Ascending aorta (tissue), 2 donors: ENCODE measurements at regions of chr2 and their contacts with region 1.

Region 1: DNA sequence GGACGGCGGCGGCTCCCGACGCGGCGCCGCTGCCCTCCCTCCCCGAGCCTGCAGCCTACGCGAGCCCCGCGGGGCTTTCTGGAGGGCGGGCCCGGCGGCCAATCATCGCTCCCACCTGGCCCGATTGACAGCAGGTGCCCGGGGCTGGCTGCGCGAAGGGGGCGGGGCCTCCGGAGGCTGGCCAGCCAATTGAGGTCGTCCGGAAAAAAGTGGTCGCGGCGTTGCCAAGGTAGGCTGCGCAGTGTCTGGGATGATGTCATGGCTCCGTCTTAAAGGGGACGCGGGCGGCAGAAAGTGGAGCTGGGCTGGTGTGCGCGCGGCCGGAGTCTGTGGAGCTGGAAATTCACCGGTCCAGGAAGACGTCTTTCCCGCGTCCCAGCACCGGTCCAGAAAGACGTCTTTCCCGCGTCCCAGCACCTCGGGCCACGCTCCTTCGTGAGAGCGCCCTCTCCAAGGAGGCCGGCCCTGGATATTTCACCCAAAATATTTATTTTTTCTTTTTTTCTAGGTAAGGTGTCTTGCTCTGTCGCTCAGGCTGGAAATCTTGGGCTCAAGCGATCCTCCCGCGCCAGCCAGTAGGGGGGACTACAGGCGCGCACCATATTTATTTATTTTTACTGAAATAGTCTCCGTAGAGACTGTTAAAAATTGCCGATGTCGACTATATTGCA is at the start of gene ACTR1B:
- DNase-seq: peak; percentile 93 to 99
- H3K4me3 ChIP-seq: peak within 1 kb of the TSS; percentile 78 to 96
- H3K27ac ChIP-seq: peak within 1 kb of the TSS; percentile 94 to 95
- H3K4me1 ChIP-seq: peaks cover 13 to 24% of the 10 kb centered on the region in 2 donors
- H3K27me3 ChIP-seq: no peaks in the 10 kb centered on the region
- CTCF ChIP-seq: peak; percentile 57 to 68 (median 61)
- total RNA-seq, gene ACTR1B: 125 TPM

Region 2: GRCh38 chr2:97645695-97646629 is 18.1 kb before region 1 on chr2 and contains the start of gene COX5B:
- intact Hi-C with region 1: loop called (anchors 1 kb)
- DNase-seq: peak; percentile 96 to 99
- H3K4me3 ChIP-seq: peak within 1 kb of the TSS; percentile 87 to 92
- H3K27ac ChIP-seq: peak within 1 kb of the TSS; percentile 96 to 98
- H3K4me1 ChIP-seq: peaks cover 3 to 9% of the 10 kb centered on the region in 2 donors
- H3K27me3 ChIP-seq: no peaks in the 10 kb centered on the region
- CTCF ChIP-seq: no peak
- total RNA-seq, gene COX5B: 251 TPM

Region 3: DNA sequence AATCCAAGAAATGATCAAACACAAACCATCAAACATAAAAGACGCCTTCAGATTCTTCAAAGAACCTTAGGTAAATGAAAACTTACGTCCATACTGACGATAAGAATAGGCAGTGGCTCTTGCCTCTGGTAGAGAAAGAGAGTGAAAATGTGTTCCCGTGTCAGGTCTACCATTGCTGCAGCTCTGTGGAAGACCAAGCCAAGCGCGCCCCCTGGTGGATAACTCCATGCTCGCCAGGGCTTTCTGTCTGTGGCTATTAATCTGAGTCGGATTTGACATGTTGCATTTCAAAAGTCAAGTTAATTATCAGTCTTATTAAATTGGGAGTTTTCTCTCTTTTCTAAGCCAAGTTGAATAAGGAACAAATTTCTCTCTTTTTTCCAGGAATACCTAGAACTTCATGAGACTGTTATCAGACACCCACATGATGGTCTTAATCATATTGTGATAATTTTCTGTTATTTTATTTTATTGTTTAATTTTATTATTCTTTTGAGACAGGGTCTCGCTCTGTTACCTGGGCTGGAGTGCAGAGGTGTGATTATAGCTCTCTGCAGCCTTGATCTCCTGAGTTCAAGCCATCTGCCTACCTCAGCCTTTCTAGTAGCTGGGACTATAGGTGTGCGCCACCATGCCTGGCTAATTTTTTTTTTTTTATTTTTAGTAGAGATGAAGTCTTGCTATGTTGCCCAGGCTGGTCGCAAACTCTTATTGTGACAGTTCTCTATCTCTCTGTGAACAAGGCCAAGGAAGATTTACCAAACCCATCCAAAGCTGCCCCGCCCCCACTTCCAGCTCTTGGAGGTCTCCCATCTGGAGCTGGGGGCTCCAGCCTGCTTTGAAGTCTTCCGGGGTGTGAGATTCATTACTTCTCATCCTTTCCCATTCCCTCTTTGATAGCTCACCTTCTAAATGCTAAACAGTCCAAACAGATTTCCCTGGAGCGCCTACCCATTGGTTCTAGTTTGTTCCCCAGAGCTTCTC is 33.4 kb after region 1 on chr2:
- intact Hi-C with region 1: loop called (anchors 2 kb)
- DNase-seq: peak; percentile 28 to 95
- H3K4me3 ChIP-seq: no peak overlapping the region
- H3K27ac ChIP-seq: no peak overlapping the region
- H3K4me1 ChIP-seq: peaks cover 0 to 2% of the 10 kb centered on the region in 2 donors
- H3K27me3 ChIP-seq: no peaks in the 10 kb centered on the region
- CTCF ChIP-seq: peak; percentile 82 to 92 (median 91)

Region 4: GRCh38 chr2:98160554-98160953 is 496.5 kb after region 1 on chr2:
- intact Hi-C with region 1: loop called (anchors 5 kb)
- DNase-seq: peak in 1 of 2 donors; percentile 69
- H3K4me3 ChIP-seq: no peak overlapping the region
- H3K27ac ChIP-seq: peak overlapping the region; percentile 79 to 83
- H3K4me1 ChIP-seq: peaks cover 31 to 44% of the 10 kb centered on the region in 2 donors
- H3K27me3 ChIP-seq: no peaks in the 10 kb centered on the region
- CTCF ChIP-seq: no peak